K562 (cell line): ENCODE measurements at regions of chr9 and their contacts with region 1.

Region 1: DNA sequence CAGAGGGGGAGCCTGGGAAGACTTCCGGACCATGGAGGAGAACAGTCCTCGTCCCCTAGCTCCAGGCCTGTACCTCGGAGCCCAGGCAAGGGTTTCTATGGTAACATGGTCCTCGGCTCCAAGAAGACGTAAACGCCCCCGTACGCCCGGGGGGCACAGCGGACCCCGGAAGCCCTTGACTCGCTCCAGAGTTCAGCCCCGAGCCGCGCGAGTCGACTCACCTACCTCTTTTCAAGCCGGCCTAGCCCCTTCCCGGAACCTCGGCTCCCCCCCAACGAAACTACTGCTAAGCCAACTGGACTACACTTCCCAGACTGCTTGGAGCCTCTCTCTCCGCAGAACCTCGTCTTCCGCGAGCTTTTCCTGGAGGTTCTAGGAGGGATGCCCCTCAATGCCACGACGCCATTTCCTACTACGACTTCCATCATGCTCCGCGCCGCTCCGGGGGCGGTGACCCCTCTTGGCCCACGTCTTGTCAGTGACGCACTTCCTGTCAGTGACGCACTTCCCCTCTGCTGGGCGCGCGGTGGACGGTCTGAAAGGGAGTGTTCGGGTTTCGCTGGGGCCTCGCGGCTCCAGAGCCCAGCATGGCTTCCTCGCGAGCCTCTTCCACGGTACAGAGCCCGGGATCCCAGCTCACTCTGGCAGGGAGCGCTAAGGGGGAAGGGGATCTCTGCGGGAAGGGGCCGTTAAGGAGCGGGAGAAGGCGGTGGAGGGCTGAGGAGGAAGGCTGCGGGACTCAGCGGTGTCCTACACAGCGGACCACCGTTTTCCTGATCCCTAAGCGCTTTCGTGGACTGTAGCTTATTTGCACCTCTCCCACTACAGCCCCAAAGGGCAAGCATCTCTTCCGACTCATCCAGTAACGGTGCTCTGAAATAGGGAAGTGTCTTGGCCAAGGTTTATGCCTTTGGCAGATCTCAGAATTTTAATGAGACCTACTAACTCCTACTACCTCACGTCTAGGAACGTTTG is at the starts of genes CDC26 and PRPF4:
- DNase-seq: peak; percentile 94 to 98 (median 94)
- ATAC-seq: peak; percentile 97
- H3K4me3 ChIP-seq: peak within 1 kb of the TSS; percentile 80
- H3K27ac ChIP-seq: peak within 1 kb of the TSS; percentile 92
- H3K4me1 ChIP-seq: peaks cover 3 to 6% of the 10 kb centered on the region in 2 experiments; a peak in 3 of 5 replicates
- H3K27me3 ChIP-seq: no peaks in the 10 kb centered on the region
- CTCF ChIP-seq: 0 out of 6 replicates have a peak, but pooled peaks of 1 of the 3 experiments have one; percentile 0
- EP300 ChIP-seq: 0 out of 2 replicates have a peak, but pooled peaks have one; percentile 2
- POLR2A ChIP-seq: peak; percentile 99
- RAD21 ChIP-seq: no peak
- polyA plus RNA-seq, gene CDC26: 132 to 147 TPM
- polyA plus RNA-seq, gene PRPF4: 25.8 to 66.0 TPM

Region 2: GRCh38 chr9:112921549-112921948 is 353.9 kb before region 1 on chr9:
- CTCF ChIA-PET with region 1: interaction called, 3 read pairs
- POLR2A ChIA-PET with region 1: no interaction called
- in situ Hi-C with region 1: no loop called
- intact Hi-C with region 1: loop called (anchors 10 kb)
- DNase-seq: peak in 3 of 4 experiments; percentile 11 to 40 (median 21)
- ATAC-seq: peak; percentile 85
- H3K4me3 ChIP-seq: no peak overlapping the region
- H3K27ac ChIP-seq: no peak overlapping the region
- H3K4me1 ChIP-seq: no peaks in the 10 kb centered on the region; a peak in 1 of 5 replicates
- H3K27me3 ChIP-seq: no peaks in the 10 kb centered on the region
- CTCF ChIP-seq: peak; percentile 65 to 76 (median 71)
- EP300 ChIP-seq: no peak
- POLR2A ChIP-seq: no peak
- RAD21 ChIP-seq: peak; percentile 72 to 78

Region 3: DNA sequence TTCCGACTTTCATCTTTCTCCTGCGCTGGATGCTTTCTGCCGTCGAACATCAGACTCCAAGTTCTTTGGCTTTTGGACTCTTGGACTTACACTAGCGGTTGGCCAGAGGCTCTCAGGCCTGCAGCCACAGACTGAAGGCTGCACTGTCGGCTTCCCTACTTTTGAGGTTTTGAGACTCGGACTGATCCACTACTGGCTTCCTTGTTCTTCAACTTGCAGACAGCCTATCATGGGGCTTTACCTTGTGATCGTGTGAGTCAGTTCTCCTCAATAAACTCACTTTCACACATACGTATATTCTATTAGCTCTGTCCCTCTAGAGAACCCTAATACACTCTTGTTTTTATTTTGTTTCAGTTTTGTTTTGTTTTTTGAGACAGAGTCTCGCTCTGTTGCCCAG is 64.6 kb before region 1 on chr9:
- CTCF ChIA-PET with region 1: no interaction called
- POLR2A ChIA-PET with region 1: no interaction called
- in situ Hi-C with region 1: no loop called
- intact Hi-C with region 1: no loop called
- DNase-seq: no peak
- ATAC-seq: no peak
- H3K4me3 ChIP-seq: no peak overlapping the region
- H3K27ac ChIP-seq: no peak overlapping the region
- H3K4me1 ChIP-seq: no peaks in the 10 kb centered on the region
- H3K27me3 ChIP-seq: no peaks in the 10 kb centered on the region
- CTCF ChIP-seq: no peak
- EP300 ChIP-seq: no peak
- POLR2A ChIP-seq: no peak
- RAD21 ChIP-seq: no peak

Region 4: DNA sequence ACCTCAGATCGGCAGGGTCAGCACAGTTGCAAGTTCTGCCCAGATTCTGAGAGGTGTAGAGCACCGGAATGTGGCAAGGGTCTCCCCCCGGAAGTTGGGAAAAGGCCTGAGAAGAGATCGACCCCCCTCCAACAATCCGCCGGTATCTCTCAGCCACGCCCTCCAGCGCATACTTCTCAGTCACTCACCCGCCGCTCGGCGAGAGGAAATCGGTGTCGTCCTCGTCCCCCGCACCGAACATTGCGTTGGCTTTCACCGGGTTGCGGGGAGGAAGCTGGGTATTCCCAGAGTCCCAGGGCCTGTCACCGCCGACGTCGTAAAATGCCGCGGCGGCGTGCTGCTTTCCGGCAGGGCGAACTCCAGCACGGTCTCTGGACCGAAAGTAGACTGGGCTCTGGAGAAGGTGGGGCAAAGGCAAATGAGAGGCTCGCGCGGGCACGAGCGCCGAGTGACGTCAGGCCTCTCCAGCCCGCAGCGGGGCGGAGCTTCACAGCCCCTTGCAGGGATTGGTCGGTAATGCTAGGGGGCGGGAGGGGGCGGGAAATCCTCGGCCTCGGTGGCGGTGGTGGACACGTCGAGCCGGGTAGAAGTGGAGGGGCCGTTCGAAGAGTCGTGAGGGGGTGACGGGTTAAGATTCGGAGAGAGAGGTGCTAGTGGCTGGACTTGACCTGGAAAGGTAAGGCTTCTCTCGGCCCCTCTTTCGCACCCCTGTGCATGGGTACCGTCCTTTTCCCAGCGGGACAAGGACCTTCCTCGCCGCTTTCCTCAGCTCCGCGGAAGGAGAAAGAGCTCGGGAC is 54.2 kb before region 1 on chr9 and contains the starts of genes FKBP15 and SLC31A1:
- CTCF ChIA-PET with region 1: no interaction called
- POLR2A ChIA-PET with region 1: interaction called, 12 read pairs
- in situ Hi-C with region 1: no loop called
- intact Hi-C with region 1: loop called (anchors 2 kb)
- DNase-seq: peak; percentile 98 to 99 (median 99)
- ATAC-seq: peak; percentile 94
- H3K4me3 ChIP-seq: peak within 1 kb of the TSS; percentile 76
- H3K27ac ChIP-seq: peak within 1 kb of the TSS; percentile 71
- H3K4me1 ChIP-seq: peaks cover 6 to 24% of the 10 kb centered on the region in 2 experiments; a peak in 3 of 5 replicates
- H3K27me3 ChIP-seq: no peaks in the 10 kb centered on the region
- CTCF ChIP-seq: no peak
- EP300 ChIP-seq: peak; percentile 22; the same call in 1 of the 2 replicates
- POLR2A ChIP-seq: peak; percentile 81
- RAD21 ChIP-seq: no peak
- polyA plus RNA-seq, gene FKBP15: 8.7 to 15.3 TPM
- polyA plus RNA-seq, gene SLC31A1: 21.7 to 30.7 TPM

Region 5: GRCh38 chr9:113401027-113401792 is 125.8 kb after region 1 on chr9 and contains the start of gene ALAD:
- CTCF ChIA-PET with region 1: interaction called, 17 read pairs
- POLR2A ChIA-PET with region 1: interaction called, 6 read pairs
- in situ Hi-C with region 1: no loop called
- intact Hi-C with region 1: loop called (anchors 10 kb)
- DNase-seq: peak; percentile 99
- ATAC-seq: peak; percentile 98
- H3K4me3 ChIP-seq: peak within 1 kb of the TSS; percentile 82
- H3K27ac ChIP-seq: peak within 1 kb of the TSS; percentile 45
- H3K4me1 ChIP-seq: peaks cover 22 to 45% of the 10 kb centered on the region in 2 experiments; a peak in 4 of 5 replicates
- H3K27me3 ChIP-seq: no peaks in the 10 kb centered on the region
- CTCF ChIP-seq: peak; percentile 93 to 96 (median 95)
- EP300 ChIP-seq: no peak
- POLR2A ChIP-seq: peak; percentile 73
- RAD21 ChIP-seq: peak; percentile 78 to 81
- polyA plus RNA-seq, gene ALAD: 1.3 to 2.3 TPM

Region 6: GRCh38 chr9:113591001-113591898 is 315.8 kb after region 1 on chr9:
- CTCF ChIA-PET with region 1: interaction called, 23 read pairs
- POLR2A ChIA-PET with region 1: interaction called, 3 read pairs
- in situ Hi-C with region 1: loop called (anchors 5 kb)
- intact Hi-C with region 1: loop called (anchors 2 kb)
- DNase-seq: peak; percentile 75 to 83 (median 79)
- ATAC-seq: peak; percentile 87
- H3K4me3 ChIP-seq: no peak overlapping the region
- H3K27ac ChIP-seq: no peak overlapping the region
- H3K4me1 ChIP-seq: peaks cover 0 to 9% of the 10 kb centered on the region in 2 experiments; a peak in 3 of 5 replicates
- H3K27me3 ChIP-seq: peaks cover 0 to 4% of the 10 kb centered on the region in 2 experiments; a peak in 2 of 5 replicates
- CTCF ChIP-seq: peak; percentile 91 to 97 (median 96)
- EP300 ChIP-seq: no peak
- POLR2A ChIP-seq: no peak
- RAD21 ChIP-seq: peak; percentile 82 to 94

Region 7: GRCh38 chr9:113906411-113907110 is 631.1 kb after region 1 on chr9:
- CTCF ChIA-PET with region 1: no interaction called
- POLR2A ChIA-PET with region 1: no interaction called
- in situ Hi-C with region 1: no loop called
- intact Hi-C with region 1: no loop called
- DNase-seq: no peak
- ATAC-seq: no peak
- H3K4me3 ChIP-seq: no peak overlapping the region
- H3K27ac ChIP-seq: no peak overlapping the region
- H3K4me1 ChIP-seq: no peaks in the 10 kb centered on the region
- H3K27me3 ChIP-seq: peaks cover 0 to 2% of the 10 kb centered on the region in 2 experiments; a peak in 2 of 5 replicates
- CTCF ChIP-seq: no peak
- EP300 ChIP-seq: no peak
- POLR2A ChIP-seq: no peak
- RAD21 ChIP-seq: no peak